ENCODE measurements at regions of chr15 and their contacts with region 1.

Region 1: DNA sequence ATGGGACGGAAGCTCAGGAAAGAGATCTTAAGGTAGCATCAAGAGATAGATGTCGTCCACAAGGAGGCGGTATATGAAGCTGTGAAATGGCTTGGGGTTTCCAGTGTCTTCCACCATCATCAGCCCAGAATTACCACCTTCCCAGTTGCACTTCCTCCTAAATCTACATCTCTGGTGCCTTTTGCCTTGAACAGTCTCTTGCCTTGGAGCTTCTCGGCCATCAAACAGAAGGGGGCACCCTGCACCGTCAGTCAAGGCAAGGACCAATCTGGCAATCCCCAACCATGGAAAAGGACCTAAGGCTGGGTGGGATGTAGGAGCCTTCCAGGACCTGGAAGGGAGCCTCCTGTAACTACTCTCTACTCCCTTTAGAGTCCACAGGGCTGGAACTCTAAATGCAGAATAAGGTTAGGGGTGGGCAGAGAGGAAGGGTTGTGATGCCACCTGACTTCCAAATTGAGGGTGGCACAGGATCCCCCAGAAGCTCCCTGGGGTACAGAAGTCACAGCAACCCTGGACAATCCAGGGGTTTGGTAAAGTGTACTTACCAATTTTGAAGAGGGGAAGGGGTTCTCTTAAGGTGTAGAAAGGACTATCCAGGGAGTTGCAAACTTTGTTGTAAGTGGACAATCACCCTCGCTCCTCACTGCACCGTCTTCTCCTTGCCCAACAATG is 1.0 kb upstream of the RYR3 start:
- DNase-seq: peak in 1 of 2 donors; percentile 54
- ATAC-seq: peak; percentile 60 to 73
- H3K4me3 ChIP-seq: peak overlapping the region in 3 of 4 donors; percentile 50 to 65 (median 60)
- H3K27ac ChIP-seq: peak overlapping the region in 1 of 4 donors; percentile 81
- H3K4me1 ChIP-seq: peaks cover 0 to 17% of the 10 kb centered on the region in 2 donors
- H3K27me3 ChIP-seq: no peaks in the 10 kb centered on the region
- CTCF ChIP-seq: peak; percentile 29 to 63 (median 42)
- POLR2A ChIP-seq: no peak

Region 2: GRCh38 chr15:33374226-33374914 is 64.6 kb after region 1 on chr15:
- in situ Hi-C with region 1: no loop called
- intact Hi-C with region 1: no loop called
- DNase-seq: no peak
- ATAC-seq: no peak
- H3K4me3 ChIP-seq: no peak overlapping the region
- H3K27ac ChIP-seq: peak overlapping the region in 1 of 4 donors; percentile 36
- H3K4me1 ChIP-seq: peaks cover 0 to 10% of the 10 kb centered on the region in 2 donors
- H3K27me3 ChIP-seq: no peaks in the 10 kb centered on the region
- CTCF ChIP-seq: no peak
- POLR2A ChIP-seq: no peak

Region 3: GRCh38 chr15:33392453-33392852 is 82.7 kb after region 1 on chr15:
- in situ Hi-C with region 1: no loop called
- intact Hi-C with region 1: loop called (anchors 5 kb)
- DNase-seq: no peak
- ATAC-seq: no peak
- H3K4me3 ChIP-seq: no peak overlapping the region
- H3K27ac ChIP-seq: no peak overlapping the region
- H3K4me1 ChIP-seq: peaks cover 34 to 60% of the 10 kb centered on the region in 2 donors
- H3K27me3 ChIP-seq: no peaks in the 10 kb centered on the region
- CTCF ChIP-seq: no peak
- POLR2A ChIP-seq: no peak

Region 4: DNA sequence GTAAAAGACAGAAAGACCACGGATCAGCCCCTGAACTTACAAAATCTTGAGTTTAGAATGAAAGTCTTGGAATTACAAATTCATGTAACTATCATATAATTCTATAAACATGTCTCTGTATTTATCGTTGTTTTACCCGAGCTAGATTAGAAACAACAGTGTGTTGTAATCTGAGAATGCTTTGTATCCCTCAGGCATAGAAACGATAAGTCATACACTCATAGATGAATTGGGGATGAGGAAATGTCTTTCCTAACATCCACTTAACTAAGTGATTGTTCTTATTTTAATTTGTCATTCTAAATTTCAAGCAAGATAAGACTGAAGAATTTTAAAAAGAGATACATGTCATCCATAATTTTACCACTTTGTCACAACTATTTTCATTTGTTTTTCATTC is 166.3 kb after region 1 on chr15:
- in situ Hi-C with region 1: no loop called
- intact Hi-C with region 1: no loop called
- DNase-seq: no peak
- ATAC-seq: no peak
- H3K4me3 ChIP-seq: no peak overlapping the region
- H3K27ac ChIP-seq: peak overlapping the region in 3 of 4 donors; percentile 2 to 54 (median 49)
- H3K4me1 ChIP-seq: peaks cover 11 to 13% of the 10 kb centered on the region in 2 donors
- H3K27me3 ChIP-seq: no peaks in the 10 kb centered on the region
- CTCF ChIP-seq: no peak
- POLR2A ChIP-seq: no peak

Region 5: DNA sequence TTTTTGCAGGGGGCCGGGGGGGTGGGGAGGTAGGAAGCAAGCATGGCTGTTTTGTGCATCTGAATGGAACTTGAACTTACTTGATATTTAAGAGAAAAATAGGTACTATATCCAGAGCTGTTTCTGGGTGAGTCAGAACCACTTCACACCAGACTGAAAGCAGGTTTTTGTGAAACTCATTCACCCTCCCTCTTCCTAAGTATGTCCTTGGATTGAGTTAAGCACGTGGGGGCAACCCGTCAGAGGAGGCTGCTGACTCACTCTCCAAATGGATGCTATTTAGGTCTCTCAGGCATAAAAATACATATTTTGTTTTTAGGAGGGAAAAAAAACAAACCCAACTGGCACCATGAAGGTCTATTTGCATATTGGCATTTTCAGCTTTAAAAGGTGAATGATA is 271.3 kb after region 1 on chr15:
- in situ Hi-C with region 1: no loop called
- intact Hi-C with region 1: loop called (anchors 10 kb)
- DNase-seq: no peak
- ATAC-seq: no peak
- H3K4me3 ChIP-seq: no peak overlapping the region
- H3K27ac ChIP-seq: no peak overlapping the region
- H3K4me1 ChIP-seq: no peaks in the 10 kb centered on the region
- H3K27me3 ChIP-seq: no peaks in the 10 kb centered on the region
- CTCF ChIP-seq: no peak
- POLR2A ChIP-seq: no peak

Region 6: DNA sequence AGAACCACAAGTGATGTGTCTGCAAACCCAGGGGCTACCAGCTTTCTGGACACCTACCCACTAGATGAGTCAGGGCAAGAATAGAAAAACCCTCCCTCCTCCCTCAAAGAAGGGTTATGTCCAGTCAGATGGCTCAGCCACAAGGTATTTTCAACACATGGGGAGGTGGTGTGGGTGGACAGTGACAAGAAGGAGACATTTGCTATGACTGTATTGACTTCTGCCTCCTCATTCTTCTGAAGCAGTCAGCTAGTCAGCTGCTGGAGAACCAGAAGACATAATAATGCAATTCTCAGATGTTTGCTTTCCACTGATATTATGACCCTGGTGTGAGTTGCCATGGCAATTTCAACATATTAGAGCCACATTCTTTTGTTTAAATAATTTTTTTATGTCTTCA is 1340.4 kb after region 1 on chr15:
- in situ Hi-C with region 1: no loop called
- intact Hi-C with region 1: no loop called
- DNase-seq: no peak
- ATAC-seq: no peak
- H3K4me3 ChIP-seq: no peak overlapping the region
- H3K27ac ChIP-seq: no peak overlapping the region
- H3K4me1 ChIP-seq: no peaks in the 10 kb centered on the region
- H3K27me3 ChIP-seq: no peaks in the 10 kb centered on the region
- CTCF ChIP-seq: no peak
- POLR2A ChIP-seq: no peak

Measured in gastrocnemius medialis (tissue), 4 donors.